A673 (cell line): ENCODE measurements at regions of chr4 and their contacts with region 1.

Region 1: DNA sequence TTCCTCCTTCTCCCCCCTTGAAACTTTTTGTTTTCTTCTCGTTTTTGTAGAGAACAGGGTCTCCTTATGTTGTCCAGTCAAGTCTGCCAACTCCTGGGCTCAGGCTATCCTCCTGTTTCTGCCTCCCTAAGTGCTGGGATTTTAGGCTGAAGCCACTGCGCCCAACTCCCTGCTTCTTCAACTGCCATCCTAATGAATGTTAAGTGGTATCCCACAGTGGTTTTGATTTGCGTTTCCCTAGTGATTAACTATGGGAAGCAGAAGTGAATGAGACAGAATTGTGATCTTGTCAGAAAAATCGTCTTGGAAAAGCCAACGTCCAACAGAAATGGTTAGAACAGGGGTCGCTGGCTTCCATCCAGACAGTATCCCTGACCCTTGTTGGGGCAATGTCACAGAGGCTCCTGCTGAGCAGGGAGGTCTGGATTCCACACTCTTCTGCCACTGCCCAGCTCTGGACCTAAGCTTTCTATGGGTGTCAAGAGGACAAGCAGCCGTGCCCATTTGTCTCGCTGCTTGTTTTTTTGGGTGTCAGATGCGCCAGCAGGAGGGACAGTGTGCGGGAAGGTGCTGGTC is 869 bp upstream of the ADD1 start:
- DNase-seq: peak; percentile 60
- H3K4me3 ChIP-seq: peak overlapping the region; percentile 95
- H3K27ac ChIP-seq: peak overlapping the region; percentile 93
- H3K4me1 ChIP-seq: peaks cover 16% of the 10 kb centered on the region
- H3K27me3 ChIP-seq: no peaks in the 10 kb centered on the region
- CTCF ChIP-seq: no peak

Region 2: DNA sequence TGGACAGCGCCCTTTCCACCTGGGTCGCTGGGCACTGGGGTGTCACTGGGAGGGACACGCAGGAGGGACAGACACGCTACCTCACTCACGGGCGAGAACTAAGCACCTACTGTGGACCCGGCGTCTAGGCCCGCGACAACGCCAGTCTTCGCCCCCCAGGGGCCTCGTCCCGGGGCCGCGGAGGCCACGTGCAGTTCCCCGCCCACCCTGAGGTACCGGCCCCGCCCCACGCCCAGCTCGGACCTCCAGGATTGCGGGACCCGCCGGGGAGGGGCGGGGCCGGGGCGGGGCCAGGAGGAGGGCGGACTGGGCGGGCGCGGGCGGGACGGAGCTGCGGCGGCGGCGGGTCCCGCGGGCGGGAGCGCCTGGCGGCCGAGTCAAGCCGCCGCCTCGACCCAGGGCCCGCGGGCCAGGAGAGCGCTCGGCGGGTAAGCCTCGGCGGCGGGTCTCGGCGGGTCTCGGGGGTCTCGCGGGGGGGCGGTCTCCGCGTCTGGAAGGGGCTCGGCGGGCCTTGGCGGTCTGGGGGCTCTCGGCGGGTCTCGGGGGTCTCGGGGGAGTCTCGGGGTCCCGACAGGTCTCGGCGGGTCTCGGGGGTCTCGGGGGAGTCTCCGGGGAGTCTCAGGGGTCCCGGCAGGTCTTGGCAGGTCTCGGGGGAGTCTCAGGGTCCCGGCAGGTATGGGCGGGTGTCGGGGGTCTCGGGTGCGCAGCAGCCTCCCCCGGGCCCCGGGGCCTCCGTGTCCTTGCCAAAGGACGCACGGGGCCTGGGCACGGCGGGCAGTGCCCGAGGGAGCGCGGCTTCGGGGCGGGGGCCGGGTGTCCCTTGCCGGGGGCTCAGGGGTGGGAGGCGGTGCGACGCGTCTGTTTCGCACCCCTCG is 49.8 kb before region 1 on chr4 and contains the start of gene SH3BP2:
- CTCF ChIA-PET with region 1: no interaction called
- POLR2A ChIA-PET with region 1: interaction called, 11 read pairs
- intact Hi-C with region 1: no loop called
- DNase-seq: peak; percentile 81
- H3K4me3 ChIP-seq: peak within 1 kb of the TSS; percentile 50
- H3K27ac ChIP-seq: no peak within 1 kb of the TSS
- H3K4me1 ChIP-seq: peaks cover 15% of the 10 kb centered on the region
- H3K27me3 ChIP-seq: no peaks in the 10 kb centered on the region
- CTCF ChIP-seq: no peak
- total RNA-seq, gene SH3BP2: 34.4 and 37.7 TPM in 2 replicates